ENCODE measurements at regions of chr12 and their contacts with region 1.

Region 1: DNA sequence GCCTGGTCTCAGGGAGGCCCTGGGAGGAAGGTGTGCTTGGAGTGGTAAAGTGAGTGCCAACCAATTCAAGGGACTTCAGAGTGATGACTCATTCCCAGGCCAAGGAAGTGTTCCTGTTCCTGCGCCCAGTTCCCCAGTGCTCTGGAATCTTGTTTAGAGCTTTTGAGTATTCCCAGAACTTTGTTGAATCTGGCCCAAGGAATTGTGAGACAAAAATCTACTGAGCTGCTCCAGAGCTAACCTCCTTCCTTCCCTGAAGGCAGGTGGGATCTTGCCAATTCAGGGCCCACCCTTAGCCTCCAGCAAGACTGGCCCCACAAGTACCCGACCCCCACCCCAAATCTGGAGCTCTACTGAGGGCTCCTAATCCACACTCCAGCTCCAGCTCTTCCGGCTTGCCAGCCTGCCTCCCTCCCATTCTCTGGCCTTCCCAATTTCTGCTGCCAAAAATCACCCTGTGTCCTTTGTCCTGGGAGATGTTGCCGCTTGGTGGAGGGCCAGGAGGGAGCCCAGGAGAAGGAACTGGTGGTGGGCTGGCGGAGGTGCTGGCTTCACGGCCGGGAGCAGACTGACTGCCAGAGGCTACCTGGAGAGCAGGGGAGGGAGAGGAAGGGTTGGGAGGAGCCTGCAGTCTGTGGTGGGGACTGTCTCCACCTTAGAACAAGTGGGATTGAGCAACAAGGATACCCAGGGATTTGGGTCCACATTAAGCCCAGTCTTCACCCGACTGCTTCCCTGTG is 2.0 kb upstream of the ATN1 start:
- DNase-seq: no peak
- H3K4me3 Mint-ChIP-seq: peak overlapping the region; percentile 97
- H3K27ac Mint-ChIP-seq: peak overlapping the region; percentile 59
- H3K4me1 Mint-ChIP-seq: peaks cover 52% of the 10 kb centered on the region
- H3K27me3 Mint-ChIP-seq: no peaks in the 10 kb centered on the region

Region 2: GRCh38 chr12:6904280-6905278 is 21.1 kb before region 1 on chr12 and contains the start of gene LRRC23:
- intact Hi-C with region 1: loop called (anchors 1 kb)
- DNase-seq: peak; percentile 100
- H3K4me3 Mint-ChIP-seq: no peak within 1 kb of the TSS
- H3K27ac Mint-ChIP-seq: peak within 1 kb of the TSS; percentile 17
- H3K4me1 Mint-ChIP-seq: peaks cover 6% of the 10 kb centered on the region
- H3K27me3 Mint-ChIP-seq: peaks cover 2% of the 10 kb centered on the region
- total RNA-seq, gene LRRC23: 6.3 and 6.6 TPM in 2 replicates

Region 3: GRCh38 chr12:6937481-6938297 is 12.0 kb after region 1 on chr12:
- intact Hi-C with region 1: loop called (anchors 1 kb)
- DNase-seq: peak; percentile 98
- H3K4me3 Mint-ChIP-seq: peak overlapping the region; percentile 94
- H3K27ac Mint-ChIP-seq: peak overlapping the region; percentile 99
- H3K4me1 Mint-ChIP-seq: peaks cover 51% of the 10 kb centered on the region
- H3K27me3 Mint-ChIP-seq: no peaks in the 10 kb centered on the region

Region 4: GRCh38 chr12:7108796-7109571 is 183.3 kb after region 1 on chr12 and contains the start of gene C1RL:
- intact Hi-C with region 1: loop called (anchors 2 kb)
- DNase-seq: peak; percentile 96
- H3K4me3 Mint-ChIP-seq: peak within 1 kb of the TSS; percentile 95
- H3K27ac Mint-ChIP-seq: peak within 1 kb of the TSS; percentile 92
- H3K4me1 Mint-ChIP-seq: peaks cover 42% of the 10 kb centered on the region
- H3K27me3 Mint-ChIP-seq: no peaks in the 10 kb centered on the region
- total RNA-seq, gene C1RL: 19.8 and 23.0 TPM in 2 replicates